Activated T-helper 1 cell treated with anti-CD3 and anti-CD28 coated beads, Interleukin-12 subunit alpha, Interleukin-12 subunit beta, Interleukin-2, Interleukin-4 antibody, amounts not matched to agents 30 ng/mL and 10 ng/mL and 1 ng/mL, durations not matched to agents 14 hours and 24 hours and 36 hours (primary cell): ENCODE measurements at regions of chr20 and their contacts with region 1.

Region 1: DNA sequence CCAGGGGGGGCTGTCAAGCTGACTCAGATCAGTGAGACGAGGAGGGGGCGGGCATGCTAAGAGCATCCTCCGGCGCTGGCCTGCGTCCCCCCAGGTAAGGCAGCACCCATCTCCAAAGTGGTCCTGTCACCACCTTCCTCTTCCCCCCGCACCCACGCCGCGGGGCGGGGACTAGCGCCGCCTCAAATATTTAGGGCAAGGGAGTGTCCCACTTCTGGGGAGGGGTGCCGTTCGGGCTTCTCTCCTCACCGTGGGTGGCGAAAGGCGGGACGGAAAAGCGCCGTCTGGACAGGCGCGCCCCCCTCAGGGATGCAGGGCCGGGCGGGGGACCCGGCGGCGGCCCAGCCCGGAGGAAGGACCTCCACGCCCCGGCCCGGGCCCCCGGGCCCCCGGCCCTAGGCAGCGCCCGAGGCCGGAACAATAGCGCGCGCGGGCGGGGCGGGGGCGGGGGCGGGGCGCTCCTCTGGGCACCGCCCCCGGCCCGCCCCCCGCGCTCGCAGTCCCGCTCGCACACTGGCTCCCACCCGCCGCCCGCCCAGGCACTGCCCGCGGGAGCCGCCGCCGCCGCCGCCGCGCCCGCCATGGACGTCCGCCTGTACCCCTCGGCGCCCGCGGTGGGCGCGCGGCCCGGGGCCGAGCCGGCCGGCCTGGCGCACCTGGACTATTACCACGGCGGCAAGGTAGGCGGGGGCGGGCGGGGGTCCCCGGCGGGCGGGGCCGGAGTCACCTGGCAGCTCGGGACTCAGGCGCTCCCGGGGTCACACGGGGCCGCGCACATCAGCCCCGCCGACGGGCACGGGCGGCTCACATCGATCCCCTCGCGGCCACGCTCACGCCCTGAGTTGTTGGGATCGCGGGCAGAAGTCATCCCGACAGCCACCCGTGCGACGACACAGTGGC is at the start of gene TOX2:
- DNase-seq: peak; percentile 42
- H3K4me3 Mint-ChIP-seq: peak within 1 kb of the TSS; percentile 87
- H3K27ac Mint-ChIP-seq: peak within 1 kb of the TSS; percentile 81
- H3K4me1 Mint-ChIP-seq: peaks cover 29% of the 10 kb centered on the region
- H3K27me3 Mint-ChIP-seq: peaks cover 37% of the 10 kb centered on the region
- total RNA-seq, gene TOX2: 4.0 and 4.8 TPM in 2 replicates

Region 2: GRCh38 chr20:43829951-43830690 is 84.4 kb before region 1 on chr20:
- intact Hi-C with region 1: no loop called
- DNase-seq: no peak
- H3K4me3 Mint-ChIP-seq: no peak overlapping the region
- H3K27ac Mint-ChIP-seq: no peak overlapping the region
- H3K4me1 Mint-ChIP-seq: peaks cover 2% of the 10 kb centered on the region
- H3K27me3 Mint-ChIP-seq: peaks cover 3% of the 10 kb centered on the region

Region 3: GRCh38 chr20:43840382-43841070 is 74.0 kb before region 1 on chr20:
- intact Hi-C with region 1: loop called (anchors 2 kb)
- DNase-seq: peak; percentile 17
- H3K4me3 Mint-ChIP-seq: no peak overlapping the region
- H3K27ac Mint-ChIP-seq: peak overlapping the region; percentile 85
- H3K4me1 Mint-ChIP-seq: peaks cover 59% of the 10 kb centered on the region
- H3K27me3 Mint-ChIP-seq: peaks cover 7% of the 10 kb centered on the region

Region 4: DNA sequence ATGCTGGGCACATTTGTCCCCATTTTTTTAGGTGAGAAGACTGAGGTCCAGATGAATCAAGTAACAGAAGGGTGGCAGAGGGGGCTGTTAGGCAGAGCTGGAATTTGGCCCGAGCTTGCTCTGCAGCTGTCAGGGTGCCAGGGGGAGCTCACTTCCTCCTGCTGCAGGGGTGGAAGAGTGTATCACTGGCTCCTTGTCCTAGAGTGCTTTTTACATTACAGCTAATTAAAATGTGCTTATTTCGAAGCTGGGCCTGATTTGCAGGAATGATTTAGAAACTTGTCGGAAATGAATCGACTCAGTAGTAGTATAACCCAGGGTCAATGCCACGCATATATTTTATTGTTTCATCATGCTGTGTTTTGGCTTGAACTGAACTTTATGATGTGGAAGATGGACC is 11.2 kb after region 1 on chr20:
- intact Hi-C with region 1: loop called (anchors 1 kb)
- DNase-seq: no peak
- H3K4me3 Mint-ChIP-seq: peak overlapping the region; percentile 56
- H3K27ac Mint-ChIP-seq: peak overlapping the region; percentile 70
- H3K4me1 Mint-ChIP-seq: peaks cover 61% of the 10 kb centered on the region
- H3K27me3 Mint-ChIP-seq: peaks cover 21% of the 10 kb centered on the region

Region 5: DNA sequence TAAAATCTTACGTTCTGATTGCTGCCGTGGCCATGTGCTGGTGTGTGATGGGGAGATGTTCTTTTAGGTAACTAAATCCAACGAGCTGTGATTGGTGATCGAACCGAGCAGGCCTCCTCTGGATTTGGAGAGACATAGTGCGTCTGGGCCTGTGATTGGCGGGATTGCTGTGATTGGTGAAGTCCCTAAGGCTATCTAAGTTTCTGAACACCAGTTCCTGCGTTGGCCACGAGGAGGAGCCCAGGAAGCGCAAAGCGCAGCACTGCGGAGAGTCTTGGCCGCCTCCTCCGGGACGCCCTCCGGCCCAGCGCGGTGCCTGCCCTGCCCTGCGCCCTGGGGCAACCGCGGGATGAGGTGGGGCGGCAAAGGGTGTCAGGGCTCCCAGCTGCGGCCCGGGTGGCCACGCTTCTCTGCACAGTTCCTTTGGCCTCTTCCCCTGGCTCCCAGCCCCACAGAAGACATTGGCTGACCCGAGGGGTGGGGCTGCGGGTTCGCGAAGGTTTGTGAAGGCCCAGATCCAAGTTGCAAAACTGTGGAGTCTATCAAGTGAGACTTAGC is 474.0 kb after region 1 on chr20:
- intact Hi-C with region 1: no loop called
- DNase-seq: peak; percentile 57
- H3K4me3 Mint-ChIP-seq: peak overlapping the region; percentile 17
- H3K27ac Mint-ChIP-seq: no peak overlapping the region
- H3K4me1 Mint-ChIP-seq: peaks cover 5% of the 10 kb centered on the region
- H3K27me3 Mint-ChIP-seq: peaks cover 6% of the 10 kb centered on the region

Region 6: GRCh38 chr20:44422083-44422482 is 507.5 kb after region 1 on chr20:
- intact Hi-C with region 1: no loop called
- DNase-seq: no peak
- H3K4me3 Mint-ChIP-seq: no peak overlapping the region
- H3K27ac Mint-ChIP-seq: no peak overlapping the region
- H3K4me1 Mint-ChIP-seq: no peaks in the 10 kb centered on the region
- H3K27me3 Mint-ChIP-seq: peaks cover 12% of the 10 kb centered on the region